ENCODE measurements at regions of chr1 and their contacts with region 1.

Region 1: GRCh38 chr1:176691251-176692228 is 228.6 kb downstream of the PAPPA2 start:
- DNase-seq: peak; percentile 1 to 42
- H3K4me3 ChIP-seq: no peak overlapping the region
- H3K27ac ChIP-seq: no peak overlapping the region
- H3K4me1 ChIP-seq: no peaks in the 10 kb centered on the region
- H3K27me3 ChIP-seq: peaks cover 13% of the 10 kb centered on the region
- CTCF ChIP-seq: peak; percentile 73

Region 2: DNA sequence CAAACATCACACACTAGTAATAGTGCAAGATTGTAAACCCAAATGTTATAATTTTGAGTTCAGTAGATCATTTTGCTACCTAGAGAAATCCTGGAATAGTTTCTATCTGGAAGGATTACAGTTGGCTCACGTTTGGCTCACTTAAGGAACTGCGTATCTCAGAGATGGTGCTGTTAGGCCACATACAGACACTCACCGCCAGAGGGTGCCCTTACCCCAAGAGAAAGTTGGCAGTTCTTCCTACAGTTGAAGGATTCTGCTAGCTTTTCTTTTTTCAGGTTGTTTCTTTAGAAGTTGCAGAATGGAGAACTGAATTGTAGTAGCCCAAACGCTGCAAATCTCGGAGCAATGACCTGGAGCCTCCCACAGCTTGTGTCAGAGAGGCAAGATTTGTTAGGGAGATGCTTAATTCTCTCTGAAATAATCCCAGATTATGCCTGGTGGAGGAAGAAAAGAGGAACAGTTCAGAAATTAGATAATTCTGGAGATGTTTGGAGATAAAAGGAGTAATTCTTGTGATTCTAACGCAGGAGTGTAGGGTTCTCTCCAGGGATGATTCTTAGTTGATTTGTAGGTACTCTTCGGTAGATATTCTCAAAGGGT is 316.5 kb before region 1 on chr1:
- CTCF ChIA-PET with region 1: no interaction called
- POLR2A ChIA-PET with region 1: no interaction called
- intact Hi-C with region 1: loop called (anchors 1 kb)
- DNase-seq: peak; percentile 42 to 59
- H3K4me3 ChIP-seq: no peak overlapping the region
- H3K27ac ChIP-seq: no peak overlapping the region
- H3K4me1 ChIP-seq: no peaks in the 10 kb centered on the region
- H3K27me3 ChIP-seq: peaks cover 6% of the 10 kb centered on the region
- CTCF ChIP-seq: peak; percentile 89

Region 3: DNA sequence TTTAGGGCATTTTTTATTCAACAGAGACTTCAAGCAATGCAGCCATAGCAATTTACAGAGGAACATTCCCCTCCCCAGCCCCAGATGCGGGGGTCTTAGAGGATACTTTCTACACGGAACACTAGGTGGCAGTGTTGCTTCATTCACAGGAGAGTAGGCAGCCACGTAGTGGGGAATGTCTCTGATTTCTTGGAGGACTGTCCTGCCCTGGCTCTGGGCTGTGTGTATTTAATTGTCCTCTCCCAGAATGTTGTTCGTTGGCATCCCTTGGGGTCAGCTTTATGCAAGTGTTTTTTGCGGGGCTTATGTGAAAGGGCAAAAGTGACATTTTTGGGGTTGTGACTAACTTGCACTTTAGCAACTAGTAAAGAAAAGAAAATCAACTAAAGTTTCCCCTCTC is 131.7 kb before region 1 on chr1:
- CTCF ChIA-PET with region 1: no interaction called
- POLR2A ChIA-PET with region 1: no interaction called
- intact Hi-C with region 1: loop called (anchors 5 kb)
- DNase-seq: peak; percentile 10 to 42
- H3K4me3 ChIP-seq: no peak overlapping the region
- H3K27ac ChIP-seq: no peak overlapping the region
- H3K4me1 ChIP-seq: no peaks in the 10 kb centered on the region
- H3K27me3 ChIP-seq: peaks cover 25% of the 10 kb centered on the region
- CTCF ChIP-seq: peak; percentile 91